Activated CD4-positive, alpha-beta T cell treated with anti-CD3 and anti-CD28 coated beads for 36 hours (primary cell): ENCODE measurements at regions of chr14 and their contacts with region 1.

Region 1: DNA sequence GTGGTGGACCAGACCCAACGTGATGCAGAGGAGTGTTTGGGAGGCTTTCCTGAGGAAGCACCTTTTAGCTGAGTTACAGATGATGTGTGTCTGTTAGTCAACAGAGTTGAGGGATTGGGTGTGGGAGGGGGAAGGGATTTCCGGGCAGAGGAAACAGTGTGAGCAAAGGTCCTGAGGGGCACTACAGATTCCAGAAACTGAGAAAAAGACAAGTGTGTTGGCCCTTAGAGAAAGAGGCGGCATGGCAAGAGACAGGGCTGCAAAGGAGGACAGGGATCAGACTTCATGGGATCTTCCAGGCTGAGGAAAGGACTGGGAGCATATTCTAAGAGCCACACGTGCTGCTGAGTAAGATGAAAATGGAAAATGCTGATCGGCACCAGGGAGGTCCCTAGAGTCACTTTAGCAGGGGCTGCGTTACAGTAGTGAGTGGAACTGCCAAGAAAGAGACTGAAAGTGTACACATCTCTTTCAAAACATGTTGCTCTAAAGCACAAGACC is 9.4 kb upstream of the RPS6KL1 start:
- DNase-seq: no peak
- ATAC-seq: peak; percentile 57
- H3K4me3 Mint-ChIP-seq: no peak overlapping the region
- H3K27ac Mint-ChIP-seq: peak overlapping the region; percentile 12
- H3K4me1 Mint-ChIP-seq: peaks cover 19% of the 10 kb centered on the region
- H3K27me3 Mint-ChIP-seq: no peaks in the 10 kb centered on the region

Region 2: GRCh38 chr14:74945823-74946682 is 13.6 kb after region 1 on chr14:
- CTCF ChIA-PET with region 1: interaction called, 11 read pairs
- POLR2A ChIA-PET with region 1: no interaction called
- intact Hi-C with region 1: no loop called
- DNase-seq: peak; percentile 87
- ATAC-seq: peak; percentile 69
- H3K4me3 Mint-ChIP-seq: no peak overlapping the region
- H3K27ac Mint-ChIP-seq: no peak overlapping the region
- H3K4me1 Mint-ChIP-seq: peaks cover 28% of the 10 kb centered on the region
- H3K27me3 Mint-ChIP-seq: no peaks in the 10 kb centered on the region